IMR-90 (cell line): ENCODE measurements at regions of chr5 and their contacts with region 1.

Region 1: GRCh38 chr5:131109540-131110255 is 55.4 kb downstream of the HINT1 start:
- DNase-seq: peak; percentile 33
- ATAC-seq: peak; percentile 91
- H3K4me3 ChIP-seq: no peak overlapping the region
- H3K27ac ChIP-seq: no peak overlapping the region
- H3K4me1 ChIP-seq: no peaks in the 10 kb centered on the region
- H3K27me3 ChIP-seq: no peaks in the 10 kb centered on the region; the same call in 1 of the 2 replicates
- CTCF ChIP-seq: peak; percentile 73
- POLR2A ChIP-seq: no peak
- RAD21 ChIP-seq: peak; percentile 72

Region 2: DNA sequence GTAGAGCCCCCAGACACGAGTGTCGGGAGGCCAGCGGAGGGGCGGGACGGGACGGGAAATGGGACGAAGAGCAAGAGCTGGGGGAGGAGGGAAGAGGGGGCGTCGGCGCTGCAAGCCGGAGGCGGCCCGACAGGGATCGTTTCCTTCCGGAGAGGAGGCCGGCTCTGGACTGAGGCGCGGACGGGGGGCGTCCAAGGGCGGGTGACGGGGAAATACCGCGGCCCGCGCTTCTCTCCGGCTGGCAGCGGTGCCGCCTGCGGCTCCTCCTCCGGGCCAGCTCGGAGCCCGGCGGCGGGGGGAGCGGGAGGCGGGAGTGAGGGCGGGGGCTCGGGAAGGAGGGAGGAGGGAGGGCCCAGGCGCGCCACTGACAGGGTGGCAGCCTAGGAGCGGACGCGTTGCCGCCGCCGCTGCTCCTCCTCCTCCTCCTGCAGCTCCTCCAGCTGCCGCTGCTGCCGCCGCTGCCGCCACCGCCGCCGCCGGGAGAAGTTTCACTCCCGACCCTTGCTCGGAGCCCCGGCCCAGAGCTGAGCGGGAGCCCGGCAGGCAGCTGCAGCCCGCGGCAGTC is 1205.5 kb before region 1 on chr5 and contains the start of gene CHSY3:
- CTCF ChIA-PET with region 1: no interaction called
- POLR2A ChIA-PET with region 1: no interaction called
- dilution Hi-C with region 1: no loop called
- in situ Hi-C with region 1: no loop called
- intact Hi-C with region 1: loop called (anchors 2 kb)
- DNase-seq: peak; percentile 54
- ATAC-seq: peak; percentile 91
- H3K4me3 ChIP-seq: peak within 1 kb of the TSS; percentile 90
- H3K27ac ChIP-seq: no peak within 1 kb of the TSS
- H3K4me1 ChIP-seq: peaks cover 5% of the 10 kb centered on the region
- H3K27me3 ChIP-seq: peaks cover 12% of the 10 kb centered on the region; the same call in 1 of the 2 replicates
- CTCF ChIP-seq: no peak
- POLR2A ChIP-seq: no peak
- RAD21 ChIP-seq: no peak
- total RNA-seq, gene CHSY3: 1.3 and 1.4 TPM in 2 replicates

Region 3: GRCh38 chr5:130109152-130109551 is 1000.5 kb before region 1 on chr5:
- CTCF ChIA-PET with region 1: no interaction called
- POLR2A ChIA-PET with region 1: no interaction called
- dilution Hi-C with region 1: no loop called
- in situ Hi-C with region 1: loop called (anchors 25 kb)
- intact Hi-C with region 1: loop called (anchors 5 kb)
- DNase-seq: peak; percentile 18
- ATAC-seq: no peak; the same call in 1 of the 2 replicates
- H3K4me3 ChIP-seq: no peak overlapping the region
- H3K27ac ChIP-seq: no peak overlapping the region
- H3K4me1 ChIP-seq: no peaks in the 10 kb centered on the region
- H3K27me3 ChIP-seq: no peaks in the 10 kb centered on the region
- CTCF ChIP-seq: peak; percentile 46
- POLR2A ChIP-seq: no peak
- RAD21 ChIP-seq: peak; percentile 46

Region 4: DNA sequence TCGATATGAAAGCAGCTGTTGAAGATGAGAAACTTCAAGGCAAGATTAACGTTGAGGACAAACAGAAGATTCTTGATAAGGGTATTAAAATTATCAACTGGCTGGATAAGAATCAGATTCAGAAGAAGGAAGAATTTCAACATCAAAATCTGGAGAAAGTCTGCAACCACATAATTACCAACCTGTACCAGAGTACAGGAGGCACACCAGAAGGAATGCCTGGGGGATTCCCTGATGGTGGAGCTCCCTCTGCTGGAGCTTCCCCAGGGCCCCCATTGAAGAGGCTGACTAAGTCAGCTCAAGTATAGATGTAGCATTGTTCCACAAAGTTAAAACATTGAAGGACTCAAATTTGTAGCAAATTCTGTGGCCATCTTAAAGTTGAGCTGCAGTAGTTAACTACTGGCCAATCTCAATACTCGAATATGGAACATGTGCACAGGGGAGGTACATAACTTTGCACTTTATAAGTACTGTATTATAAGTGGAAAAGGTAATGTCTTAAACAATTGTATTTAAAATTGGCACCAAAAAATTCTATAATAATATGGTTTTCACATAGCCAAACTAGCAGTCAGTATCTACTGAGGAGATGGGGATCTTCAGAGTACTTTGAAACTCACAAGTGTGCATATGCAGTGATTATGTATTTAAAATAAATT is 967.9 kb before region 1 on chr5:
- CTCF ChIA-PET with region 1: no interaction called
- POLR2A ChIA-PET with region 1: no interaction called
- dilution Hi-C with region 1: no loop called
- in situ Hi-C with region 1: no loop called
- intact Hi-C with region 1: loop called (anchors 1 kb)
- DNase-seq: no peak
- ATAC-seq: no peak
- H3K4me3 ChIP-seq: no peak overlapping the region
- H3K27ac ChIP-seq: no peak overlapping the region
- H3K4me1 ChIP-seq: no peaks in the 10 kb centered on the region
- H3K27me3 ChIP-seq: no peaks in the 10 kb centered on the region
- CTCF ChIP-seq: peak; percentile 33
- POLR2A ChIP-seq: no peak
- RAD21 ChIP-seq: peak; percentile 49

Region 5: DNA sequence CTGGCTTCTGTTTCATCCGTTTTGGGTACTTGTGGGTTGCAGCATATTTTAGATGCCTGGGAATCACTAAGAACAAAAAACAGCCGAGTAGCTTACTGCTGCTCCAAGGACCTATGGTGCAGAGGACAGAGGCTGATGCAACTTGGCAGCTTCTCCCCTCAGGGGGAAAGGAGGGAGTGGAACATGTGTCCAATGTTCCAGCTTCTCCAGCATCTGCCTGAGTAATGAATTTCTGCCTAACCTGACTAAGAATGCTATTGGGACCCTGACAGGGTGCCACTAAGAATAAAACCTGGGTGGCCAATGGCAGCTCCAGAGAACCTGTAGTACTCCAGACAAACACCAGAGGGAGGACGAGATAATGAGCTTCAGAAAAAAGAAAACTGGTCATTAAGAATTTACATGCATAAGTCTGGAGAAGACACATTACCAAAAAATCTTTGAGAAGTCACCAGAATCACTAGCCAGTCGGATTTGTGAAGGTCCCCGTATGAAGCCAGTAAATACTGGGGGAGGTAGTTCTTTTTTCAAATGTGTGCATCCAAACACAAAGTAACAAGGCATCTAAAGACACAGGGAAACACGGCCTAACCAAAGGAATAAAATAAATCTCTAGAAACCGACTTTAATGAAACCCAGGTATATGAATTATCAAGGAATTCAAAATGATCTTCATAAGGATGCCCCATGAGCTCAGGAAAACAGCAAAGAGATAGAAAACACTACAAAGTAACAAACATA is 238.2 kb before region 1 on chr5:
- CTCF ChIA-PET with region 1: no interaction called
- POLR2A ChIA-PET with region 1: no interaction called
- dilution Hi-C with region 1: no loop called
- in situ Hi-C with region 1: no loop called
- intact Hi-C with region 1: loop called (anchors 5 kb)
- DNase-seq: peak; percentile 1
- ATAC-seq: peak; percentile 14; the same call in 1 of the 2 replicates
- H3K4me3 ChIP-seq: no peak overlapping the region
- H3K27ac ChIP-seq: no peak overlapping the region
- H3K4me1 ChIP-seq: no peaks in the 10 kb centered on the region
- H3K27me3 ChIP-seq: no peaks in the 10 kb centered on the region
- CTCF ChIP-seq: peak; percentile 50
- POLR2A ChIP-seq: no peak
- RAD21 ChIP-seq: peak; percentile 46

Region 6: GRCh38 chr5:131148835-131149234 is 39.1 kb after region 1 on chr5:
- CTCF ChIA-PET with region 1: no interaction called
- POLR2A ChIA-PET with region 1: no interaction called
- dilution Hi-C with region 1: no loop called
- in situ Hi-C with region 1: no loop called
- intact Hi-C with region 1: no loop called
- DNase-seq: no peak
- ATAC-seq: no peak
- H3K4me3 ChIP-seq: no peak overlapping the region
- H3K27ac ChIP-seq: no peak overlapping the region
- H3K4me1 ChIP-seq: peaks cover 3% of the 10 kb centered on the region; the same call in 1 of the 2 replicates
- H3K27me3 ChIP-seq: no peaks in the 10 kb centered on the region
- CTCF ChIP-seq: no peak
- POLR2A ChIP-seq: no peak
- RAD21 ChIP-seq: no peak

Region 7: GRCh38 chr5:131417240-131417869 is 307.7 kb after region 1 on chr5:
- CTCF ChIA-PET with region 1: no interaction called
- POLR2A ChIA-PET with region 1: no interaction called
- dilution Hi-C with region 1: no loop called
- in situ Hi-C with region 1: no loop called
- intact Hi-C with region 1: loop called (anchors 1 kb)
- DNase-seq: peak; percentile 71
- ATAC-seq: peak; percentile 76
- H3K4me3 ChIP-seq: no peak overlapping the region
- H3K27ac ChIP-seq: no peak overlapping the region
- H3K4me1 ChIP-seq: no peaks in the 10 kb centered on the region
- H3K27me3 ChIP-seq: no peaks in the 10 kb centered on the region
- CTCF ChIP-seq: peak; percentile 84
- POLR2A ChIP-seq: no peak
- RAD21 ChIP-seq: peak; percentile 85

Region 8: GRCh38 chr5:131475541-131475941 is 365.8 kb after region 1 on chr5:
- CTCF ChIA-PET with region 1: no interaction called
- POLR2A ChIA-PET with region 1: no interaction called
- dilution Hi-C with region 1: no loop called
- in situ Hi-C with region 1: no loop called
- intact Hi-C with region 1: no loop called
- DNase-seq: peak; percentile 25
- ATAC-seq: no peak
- H3K4me3 ChIP-seq: no peak overlapping the region
- H3K27ac ChIP-seq: no peak overlapping the region
- H3K4me1 ChIP-seq: no peaks in the 10 kb centered on the region
- H3K27me3 ChIP-seq: no peaks in the 10 kb centered on the region
- CTCF ChIP-seq: no peak
- POLR2A ChIP-seq: no peak
- RAD21 ChIP-seq: no peak